H1 (cell line): ENCODE measurements at regions of chr6 and their contacts with region 1.

Region 1: DNA sequence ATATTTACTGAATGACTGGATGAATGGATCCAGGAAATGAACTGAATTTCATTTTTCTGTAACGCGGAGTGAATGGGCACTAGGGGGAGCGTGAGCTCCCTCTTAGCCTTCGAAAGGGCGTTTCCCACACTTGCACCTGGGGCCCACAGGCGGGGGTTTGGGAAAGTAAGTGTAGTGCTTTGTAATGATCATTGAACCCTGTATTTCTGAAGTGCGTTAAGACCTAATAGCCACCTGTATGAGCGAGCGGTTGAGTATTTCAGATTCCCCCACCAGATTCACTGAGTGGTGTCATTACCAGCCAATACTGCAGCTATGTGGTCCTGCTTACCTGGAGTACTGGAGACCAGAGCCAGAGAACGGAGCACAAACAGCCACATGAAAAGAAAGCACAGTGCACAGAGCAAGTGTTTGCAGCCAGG is 10.5 kb downstream of the SYTL3 start:
- DNase-seq: peak in 1 of 2 experiments; percentile 61
- H3K4me3 ChIP-seq: no peak overlapping the region
- H3K27ac ChIP-seq: no peak overlapping the region
- H3K4me1 ChIP-seq: peaks cover 0 to 8% (median 4%) of the 10 kb centered on the region in 4 experiments; a peak in 4 of 7 replicates
- H3K27me3 ChIP-seq: no peaks in the 10 kb centered on the region; a peak in 1 of 7 replicates
- CTCF ChIP-seq: peak; percentile 52 to 69 (median 67)
- EP300 ChIP-seq: no peak
- POLR2A ChIP-seq: no peak
- RAD21 ChIP-seq: peak; percentile 61 to 70

Region 2: DNA sequence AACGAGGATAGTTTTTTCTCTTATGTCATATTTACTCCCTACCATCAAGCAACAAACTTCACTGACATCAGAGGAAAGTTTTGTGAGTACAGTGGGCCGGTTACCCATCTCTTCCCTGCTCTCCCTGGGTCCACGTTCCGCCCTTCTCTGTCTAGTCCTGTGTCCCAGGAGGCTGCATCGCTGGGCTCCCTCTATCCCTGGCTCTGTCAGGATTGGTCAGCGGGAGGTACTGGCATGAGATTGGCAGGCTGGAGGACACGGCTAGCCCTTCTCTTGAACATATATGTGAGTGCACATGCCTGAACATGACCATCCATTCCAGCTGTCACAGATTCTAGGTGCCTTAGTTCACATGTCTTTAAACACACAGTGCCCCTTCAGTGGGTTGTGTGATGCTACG is 130.7 kb before region 1 on chr6:
- CTCF ChIA-PET with region 1: no interaction called
- POLR2A ChIA-PET with region 1: no interaction called
- DNase-seq: no peak
- H3K4me3 ChIP-seq: no peak overlapping the region
- H3K27ac ChIP-seq: no peak overlapping the region
- H3K4me1 ChIP-seq: no peaks in the 10 kb centered on the region
- H3K27me3 ChIP-seq: no peaks in the 10 kb centered on the region; a peak in 1 of 7 replicates
- CTCF ChIP-seq: no peak
- EP300 ChIP-seq: no peak
- POLR2A ChIP-seq: no peak
- RAD21 ChIP-seq: no peak

Region 3: GRCh38 chr6:158644231-158645063 is 15.9 kb before region 1 on chr6 and contains the start of gene DYNLT1:
- CTCF ChIA-PET with region 1: interaction called, 73 read pairs
- POLR2A ChIA-PET with region 1: interaction called, 9 read pairs
- DNase-seq: peak; percentile 80 to 99
- H3K4me3 ChIP-seq: peak within 1 kb of the TSS; percentile 91 to 97 (median 95)
- H3K27ac ChIP-seq: peak within 1 kb of the TSS; percentile 91
- H3K4me1 ChIP-seq: peaks cover 0 to 7% (median 3%) of the 10 kb centered on the region in 4 experiments; a peak in 2 of 7 replicates
- H3K27me3 ChIP-seq: peaks cover 0 to 4% (median 0%) of the 10 kb centered on the region in 4 experiments; a peak in 2 of 7 replicates
- CTCF ChIP-seq: 0 out of 4 replicates have a peak, but pooled peaks of 1 of the 3 experiments have one; percentile 3
- EP300 ChIP-seq: no peak
- POLR2A ChIP-seq: peak; percentile 94 to 95
- RAD21 ChIP-seq: no peak; a peak in 1 of 4 replicates
- total RNA-seq, gene DYNLT1: 109 and 119 TPM in 2 replicates

Region 4: DNA sequence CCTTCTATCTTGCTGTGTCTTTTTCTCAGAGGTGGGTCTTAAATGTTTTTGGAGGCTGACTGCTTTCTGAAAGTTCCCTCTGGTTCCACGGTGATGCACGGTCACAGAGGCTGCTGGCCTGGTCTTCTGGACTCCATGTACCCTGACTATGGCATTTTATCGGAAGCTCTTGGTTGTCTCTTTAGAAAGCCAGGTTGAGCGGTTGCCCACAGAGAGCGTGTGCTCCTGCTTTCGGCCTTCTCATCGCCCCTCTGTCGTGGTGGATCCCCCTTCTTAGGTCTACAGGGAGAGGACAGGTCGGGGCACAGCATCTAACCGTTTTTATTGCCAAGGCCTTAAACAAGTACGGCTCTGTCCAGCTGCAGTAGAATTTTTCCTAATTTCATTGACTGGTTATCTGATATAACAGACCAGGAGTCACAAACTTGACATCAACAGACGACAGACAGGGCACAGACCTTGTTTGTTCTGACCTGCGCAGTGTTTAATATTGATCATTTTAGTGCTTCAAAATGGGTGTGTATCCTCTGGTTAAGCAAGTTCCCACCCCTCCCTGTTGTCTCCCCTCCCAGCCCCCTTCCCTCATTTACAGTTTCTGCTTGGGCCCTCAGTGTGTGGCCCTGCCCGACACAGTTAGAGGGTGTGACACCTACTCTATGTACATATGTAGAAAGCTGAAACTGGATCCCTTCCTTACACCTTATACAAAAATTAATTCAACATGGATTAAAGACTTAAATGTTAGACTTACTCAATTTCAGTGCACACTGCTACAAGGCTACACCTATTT is 14.2 kb after region 1 on chr6:
- CTCF ChIA-PET with region 1: interaction called, 39 read pairs
- POLR2A ChIA-PET with region 1: interaction called, 3 read pairs
- DNase-seq: no peak
- H3K4me3 ChIP-seq: no peak overlapping the region
- H3K27ac ChIP-seq: no peak overlapping the region
- H3K4me1 ChIP-seq: no peaks in the 10 kb centered on the region
- H3K27me3 ChIP-seq: no peaks in the 10 kb centered on the region
- CTCF ChIP-seq: no peak
- EP300 ChIP-seq: no peak
- POLR2A ChIP-seq: no peak
- RAD21 ChIP-seq: no peak

Region 5: GRCh38 chr6:158697811-158698210 is 37.5 kb after region 1 on chr6:
- CTCF ChIA-PET with region 1: interaction called, 104 read pairs
- POLR2A ChIA-PET with region 1: no interaction called
- DNase-seq: no peak
- H3K4me3 ChIP-seq: no peak overlapping the region
- H3K27ac ChIP-seq: no peak overlapping the region
- H3K4me1 ChIP-seq: no peaks in the 10 kb centered on the region
- H3K27me3 ChIP-seq: no peaks in the 10 kb centered on the region
- CTCF ChIP-seq: no peak
- EP300 ChIP-seq: no peak
- POLR2A ChIP-seq: no peak
- RAD21 ChIP-seq: no peak